Heart right ventricle (tissue), 16 donors: ENCODE measurements at regions of chr17 and their contacts with region 1.

Region 1: GRCh38 chr17:2179615-2180295 is 123.8 kb downstream of the SMG6 start:
- DNase-seq: peak; percentile 60 to 97
- ATAC-seq: peak; percentile 64 to 80 (median 77)
- H3K4me3 ChIP-seq: no peak overlapping the region
- H3K27ac ChIP-seq: peak overlapping the region; percentile 79 to 96 (median 88)
- H3K4me1 ChIP-seq: peaks cover 63 to 86% (median 82%) of the 10 kb centered on the region in 9 donors
- H3K27me3 ChIP-seq: no peaks in the 10 kb centered on the region
- CTCF ChIP-seq: no peak

Region 2: GRCh38 chr17:2087597-2088211 is 92.1 kb before region 1 on chr17:
- intact Hi-C with region 1: loop called in 3 of 10 experiments (anchors 5 to 10 kb)
- DNase-seq: peak in 1 of 2 donors; percentile 67
- ATAC-seq: peak in 2 of 8 donors; percentile 4 to 5
- H3K4me3 ChIP-seq: no peak overlapping the region
- H3K27ac ChIP-seq: peak overlapping the region in 9 of 10 donors; percentile 88 to 97 (median 92)
- H3K4me1 ChIP-seq: peaks cover 51 to 98% (median 89%) of the 10 kb centered on the region in 9 donors
- H3K27me3 ChIP-seq: no peaks in the 10 kb centered on the region
- CTCF ChIP-seq: no peak

Region 3: DNA sequence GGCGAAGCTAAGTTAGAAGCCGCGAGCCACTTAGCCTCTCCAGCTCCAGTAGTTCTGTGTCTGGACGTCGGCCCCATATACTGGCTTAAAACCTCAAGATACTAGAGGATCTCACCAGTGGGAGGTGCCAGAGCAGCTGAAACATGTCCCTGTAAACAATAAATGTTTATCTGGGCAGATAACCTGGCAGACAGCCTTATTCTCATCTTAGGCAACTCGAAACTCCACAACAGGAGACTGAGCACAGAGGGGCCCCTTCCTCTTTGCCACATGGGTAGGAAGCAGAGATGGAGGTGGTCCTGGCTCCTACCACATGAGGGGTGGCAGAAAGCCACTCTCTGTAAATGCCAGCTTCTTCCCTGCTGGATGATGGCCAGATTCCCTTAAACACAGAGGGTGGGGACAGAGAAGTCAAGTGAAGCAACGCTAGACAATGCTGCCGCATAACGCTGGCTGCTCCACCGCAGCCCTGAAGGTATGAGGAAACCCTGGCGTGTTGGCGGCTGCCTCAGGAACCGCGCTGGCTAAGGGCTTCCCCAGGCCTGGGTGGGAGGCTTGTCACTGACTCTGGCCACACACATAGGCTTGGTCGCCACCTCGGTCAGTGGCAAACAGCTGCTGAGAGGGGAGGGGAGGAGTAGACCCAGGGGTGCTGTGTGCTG is 57.0 kb before region 1 on chr17:
- intact Hi-C with region 1: loop called in 5 of 10 experiments (anchors 5 to 10 kb)
- DNase-seq: peak; percentile 54 to 63
- ATAC-seq: peak; percentile 66 to 91 (median 78)
- H3K4me3 ChIP-seq: peak overlapping the region in 6 of 10 donors; percentile 5 to 23 (median 11)
- H3K27ac ChIP-seq: peak overlapping the region; percentile 28 to 89 (median 80)
- H3K4me1 ChIP-seq: peaks cover 12 to 48% (median 32%) of the 10 kb centered on the region in 9 donors
- H3K27me3 ChIP-seq: no peaks in the 10 kb centered on the region
- CTCF ChIP-seq: peak in 6 of 9 donors; percentile 5 to 33 (median 27)

Region 4: DNA sequence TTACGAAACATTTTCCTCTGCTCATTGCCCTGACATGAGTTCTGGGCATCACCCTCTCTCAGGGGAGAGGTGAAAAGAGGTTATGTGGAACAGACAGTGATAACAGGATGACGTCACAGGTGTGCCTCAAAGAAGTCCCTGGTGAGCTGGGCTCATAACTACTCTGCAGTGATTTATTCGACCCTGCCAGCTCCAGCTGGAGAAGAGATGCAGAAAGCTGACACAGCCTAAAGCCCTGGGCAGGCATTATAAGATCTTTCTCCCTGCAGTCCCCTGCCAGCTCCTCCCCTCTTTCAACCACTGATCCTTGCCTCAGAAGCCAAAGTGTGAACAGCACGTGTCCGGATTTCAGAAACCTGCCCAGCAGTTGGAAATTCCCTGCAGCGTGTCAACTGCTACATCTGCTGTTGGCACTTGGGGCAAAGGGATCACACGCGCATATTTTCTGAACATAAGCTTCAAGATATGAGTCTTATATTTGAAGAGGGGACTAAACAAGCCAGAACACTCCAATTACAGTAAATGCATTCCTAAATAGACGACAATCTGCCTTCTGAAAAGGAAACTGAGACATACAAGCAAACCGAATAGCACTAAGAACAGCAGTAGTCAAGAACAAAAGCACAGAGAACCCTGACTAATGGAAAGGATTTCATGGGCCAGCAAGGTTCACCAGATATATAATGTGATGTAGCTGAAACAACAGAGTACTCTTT is 43.3 kb after region 1 on chr17:
- intact Hi-C with region 1: loop called in 3 of 10 experiments (anchors 5 kb)
- DNase-seq: peak; percentile 36 to 69
- ATAC-seq: peak; percentile 86 to 98 (median 92)
- H3K4me3 ChIP-seq: no peak overlapping the region
- H3K27ac ChIP-seq: peak overlapping the region in 9 of 10 donors; percentile 31 to 85 (median 66)
- H3K4me1 ChIP-seq: peaks cover 3 to 33% (median 18%) of the 10 kb centered on the region in 9 donors
- H3K27me3 ChIP-seq: no peaks in the 10 kb centered on the region
- CTCF ChIP-seq: peak in 2 of 9 donors; percentile 23 to 34